Calu3 (cell line): ENCODE measurements at regions of chr20 and their contacts with region 1.

Region 1: DNA sequence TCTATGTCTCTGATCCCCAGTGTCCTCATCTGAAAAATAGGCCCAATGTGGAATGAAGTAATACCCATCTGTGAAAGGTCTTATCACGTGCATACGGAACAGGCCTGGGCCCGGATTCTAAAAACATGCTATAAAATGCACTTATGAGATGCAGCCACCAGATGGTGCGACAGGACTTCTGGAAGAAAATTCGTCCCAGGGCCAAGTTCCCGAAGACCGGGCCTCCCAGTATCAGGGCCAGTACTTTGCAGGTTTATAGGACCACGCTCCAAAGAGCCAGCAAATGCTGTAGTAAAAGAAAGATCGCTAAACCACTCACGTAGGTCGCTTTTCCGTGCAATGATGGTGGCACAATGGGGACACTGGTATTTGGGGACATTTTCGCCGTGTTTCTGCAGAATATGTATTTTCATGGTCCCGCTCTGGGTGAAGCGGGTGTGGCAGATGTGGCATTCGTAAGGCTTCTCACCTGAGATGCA is 10.6 kb downstream of the CTCFL start:
- DNase-seq: peak; percentile 79
- H3K4me3 Mint-ChIP-seq: no peak overlapping the region
- H3K27ac Mint-ChIP-seq: no peak overlapping the region
- H3K4me1 Mint-ChIP-seq: no peaks in the 10 kb centered on the region
- H3K27me3 Mint-ChIP-seq: peaks cover 55% of the 10 kb centered on the region
- CTCF ChIP-seq: peak; percentile 82

Region 2: GRCh38 chr20:56925082-56925830 is 589.1 kb before region 1 on chr20:
- CTCF ChIA-PET with region 1: no interaction called
- intact Hi-C with region 1: no loop called
- DNase-seq: no peak
- H3K4me3 Mint-ChIP-seq: no peak overlapping the region
- H3K27ac Mint-ChIP-seq: no peak overlapping the region
- H3K4me1 Mint-ChIP-seq: no peaks in the 10 kb centered on the region
- H3K27me3 Mint-ChIP-seq: peaks cover 75% of the 10 kb centered on the region
- CTCF ChIP-seq: no peak

Region 3: GRCh38 chr20:57432874-57433491 is 81.3 kb before region 1 on chr20:
- CTCF ChIA-PET with region 1: no interaction called
- intact Hi-C with region 1: no loop called
- DNase-seq: peak; percentile 72
- H3K4me3 Mint-ChIP-seq: no peak overlapping the region
- H3K27ac Mint-ChIP-seq: no peak overlapping the region
- H3K4me1 Mint-ChIP-seq: peaks cover 47% of the 10 kb centered on the region
- H3K27me3 Mint-ChIP-seq: peaks cover 17% of the 10 kb centered on the region
- CTCF ChIP-seq: no peak

Region 4: GRCh38 chr20:58209652-58210397 is 695.5 kb after region 1 on chr20:
- CTCF ChIA-PET with region 1: no interaction called
- intact Hi-C with region 1: loop called (anchors 1 kb)
- DNase-seq: peak; percentile 96
- H3K4me3 Mint-ChIP-seq: peak overlapping the region; percentile 51
- H3K27ac Mint-ChIP-seq: peak overlapping the region; percentile 52
- H3K4me1 Mint-ChIP-seq: peaks cover 17% of the 10 kb centered on the region
- H3K27me3 Mint-ChIP-seq: peaks cover 47% of the 10 kb centered on the region
- CTCF ChIP-seq: peak; percentile 100

Region 5: DNA sequence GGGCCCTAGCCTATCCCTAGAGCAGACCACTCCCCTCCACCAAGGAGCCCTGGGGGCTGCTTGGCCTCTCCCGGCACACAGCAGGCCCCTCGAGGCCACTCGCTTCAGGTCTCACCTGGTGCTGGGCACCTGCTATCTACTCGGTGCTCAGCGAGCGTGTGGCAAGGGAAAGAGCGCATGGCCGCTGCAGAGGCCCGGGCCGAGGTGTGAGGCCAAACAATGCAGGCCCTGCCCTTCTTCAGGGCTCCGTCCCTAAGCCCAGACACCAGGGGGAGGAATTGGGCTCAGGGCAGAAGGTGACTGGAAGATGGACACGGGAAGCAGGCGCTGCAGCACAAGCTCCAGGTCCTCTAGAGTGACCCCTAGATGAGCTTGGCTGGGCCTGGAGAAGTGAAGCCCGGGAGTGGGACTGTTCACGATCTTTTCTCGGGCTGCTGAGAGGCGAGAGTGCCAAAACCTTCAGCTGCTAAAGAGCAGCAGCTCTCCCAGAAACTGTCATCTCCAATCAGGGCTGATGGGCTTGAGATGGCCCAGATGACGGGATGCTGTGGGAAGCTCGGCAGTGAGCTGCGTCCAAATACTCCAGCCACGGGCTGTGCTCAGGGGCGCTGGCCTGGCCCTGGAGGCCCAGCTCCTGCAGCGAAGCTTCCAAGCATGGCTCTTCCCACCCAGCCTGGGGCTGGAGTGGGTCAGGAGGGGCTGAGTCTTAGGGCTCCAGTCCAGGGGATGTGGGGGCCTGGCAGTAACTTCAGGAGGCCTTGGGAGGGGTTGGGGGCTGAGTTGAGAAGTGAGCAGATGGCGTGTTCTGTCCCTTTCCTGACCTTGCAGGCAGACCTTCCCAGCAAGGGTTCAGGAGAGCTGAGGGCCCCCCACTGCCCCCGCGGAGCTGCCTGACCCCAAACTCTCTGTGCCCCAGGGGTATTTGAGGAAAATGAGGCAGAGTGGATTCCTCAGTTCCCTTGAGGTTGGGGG is 957.2 kb after region 1 on chr20:
- CTCF ChIA-PET with region 1: no interaction called
- intact Hi-C with region 1: no loop called
- DNase-seq: no peak
- H3K4me3 Mint-ChIP-seq: no peak overlapping the region
- H3K27ac Mint-ChIP-seq: no peak overlapping the region
- H3K4me1 Mint-ChIP-seq: no peaks in the 10 kb centered on the region
- H3K27me3 Mint-ChIP-seq: peaks cover 45% of the 10 kb centered on the region
- CTCF ChIP-seq: no peak